SK-N-SH (cell line): ENCODE measurements at regions of chr2 and their contacts with region 1.

Region 1: GRCh38 chr2:37414470-37414949 is 70.1 kb downstream of the QPCT start:
- DNase-seq: peak; percentile 72
- H3K4me3 ChIP-seq: no peak overlapping the region; a peak in 1 of 4 replicates
- H3K27ac ChIP-seq: peak overlapping the region; percentile 42 to 87; a peak in 3 of 4 replicates
- H3K4me1 ChIP-seq: peaks cover 10 to 16% of the 10 kb centered on the region in 2 experiments
- H3K27me3 ChIP-seq: no peaks in the 10 kb centered on the region
- CTCF ChIP-seq: peak; percentile 99
- EP300 ChIP-seq: 0 out of 4 replicates have a peak, but pooled peaks of 1 of the 2 experiments have one; percentile 36
- RAD21 ChIP-seq: peak; percentile 100

Region 2: DNA sequence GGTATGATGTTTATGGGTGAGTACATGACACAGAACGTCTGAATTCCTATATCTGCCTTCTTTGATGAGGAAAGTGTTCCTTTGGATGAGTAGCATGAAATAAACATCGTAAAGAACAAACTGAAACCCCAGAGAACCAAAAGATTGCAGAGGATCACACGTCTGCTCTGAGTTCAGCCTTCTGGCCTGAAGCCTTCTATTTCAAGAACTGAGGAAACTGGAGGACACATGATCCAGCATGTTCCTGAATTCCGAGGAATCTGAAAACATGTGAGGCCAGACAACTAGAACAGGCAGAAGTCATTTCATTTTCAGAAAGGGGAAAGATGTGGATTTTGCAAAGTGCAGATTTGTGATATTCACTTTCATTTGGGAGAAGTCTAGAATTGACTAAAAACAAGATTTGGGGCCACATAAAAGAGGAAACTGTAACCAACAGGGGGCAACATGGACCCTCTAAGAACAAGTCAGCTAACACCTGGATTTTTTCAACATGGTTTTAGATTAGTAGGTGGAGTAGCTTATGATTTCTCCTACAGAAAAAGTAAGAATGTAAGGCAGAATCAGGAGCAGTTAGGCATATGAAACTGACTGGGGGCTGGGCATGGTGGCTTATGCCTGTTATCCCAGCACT is 234.4 kb before region 1 on chr2:
- CTCF ChIA-PET with region 1: no interaction called
- POLR2A ChIA-PET with region 1: no interaction called
- DNase-seq: no peak
- H3K4me3 ChIP-seq: no peak overlapping the region
- H3K27ac ChIP-seq: no peak overlapping the region
- H3K4me1 ChIP-seq: no peaks in the 10 kb centered on the region
- H3K27me3 ChIP-seq: no peaks in the 10 kb centered on the region
- CTCF ChIP-seq: no peak; the same call in 1 of the 2 replicates
- EP300 ChIP-seq: no peak
- RAD21 ChIP-seq: no peak

Region 3: GRCh38 chr2:37427241-37427640 is 12.7 kb after region 1 on chr2:
- CTCF ChIA-PET with region 1: interaction called, 30 read pairs
- POLR2A ChIA-PET with region 1: no interaction called
- DNase-seq: no peak
- H3K4me3 ChIP-seq: no peak overlapping the region
- H3K27ac ChIP-seq: no peak overlapping the region
- H3K4me1 ChIP-seq: no peaks in the 10 kb centered on the region
- H3K27me3 ChIP-seq: no peaks in the 10 kb centered on the region
- CTCF ChIP-seq: no peak
- EP300 ChIP-seq: no peak
- RAD21 ChIP-seq: no peak

Region 4: DNA sequence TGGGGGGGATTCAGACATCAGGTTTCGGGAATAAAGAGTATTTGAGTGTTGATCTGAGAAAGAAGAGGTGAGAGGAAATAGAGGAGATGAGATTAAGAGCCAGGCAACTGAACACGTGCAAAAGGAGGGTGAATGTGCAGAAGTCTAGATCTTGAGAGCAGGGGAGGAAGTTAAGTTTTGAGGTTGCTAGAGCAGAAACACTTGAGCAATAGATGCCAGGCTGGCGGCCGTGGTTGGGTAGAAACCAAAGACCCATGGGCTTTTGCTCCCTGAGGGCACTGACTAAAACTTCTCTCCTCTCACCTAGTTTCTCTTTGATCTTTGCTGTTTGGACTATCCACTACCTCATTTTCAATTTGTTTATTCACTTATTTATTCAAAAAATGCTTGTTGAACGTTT is 140.9 kb after region 1 on chr2:
- CTCF ChIA-PET with region 1: interaction called, 64 read pairs
- POLR2A ChIA-PET with region 1: interaction called, 3 read pairs
- DNase-seq: no peak
- H3K4me3 ChIP-seq: no peak overlapping the region
- H3K27ac ChIP-seq: peak overlapping the region in 1 of 2 experiments; percentile 99; a peak in 2 of 4 replicates
- H3K4me1 ChIP-seq: peaks cover under 1 to 42% of the 10 kb centered on the region in 2 experiments; a peak in 3 of 4 replicates
- H3K27me3 ChIP-seq: no peaks in the 10 kb centered on the region
- CTCF ChIP-seq: no peak
- EP300 ChIP-seq: no peak
- RAD21 ChIP-seq: no peak

Region 5: DNA sequence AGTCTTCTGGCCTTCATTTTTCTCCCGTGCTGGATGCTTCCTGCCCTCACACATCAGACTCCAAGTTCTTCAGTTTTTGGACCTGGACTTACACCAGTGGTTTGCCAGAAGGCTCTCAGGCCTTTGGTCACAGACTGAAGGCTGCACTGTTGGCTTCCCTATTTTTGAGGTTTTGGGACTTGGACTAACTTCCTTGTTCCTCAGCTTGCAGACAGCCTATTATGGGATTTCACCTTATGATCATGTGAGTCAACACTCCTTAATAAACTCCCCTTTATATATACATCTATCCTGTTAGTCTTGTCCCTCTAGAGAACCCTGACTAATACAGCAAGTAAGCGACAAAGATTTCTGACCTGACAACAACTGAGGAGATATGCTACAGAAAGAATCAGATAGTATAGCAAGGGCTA is 249.7 kb after region 1 on chr2:
- CTCF ChIA-PET with region 1: interaction called, 55 read pairs
- POLR2A ChIA-PET with region 1: interaction called, 10 read pairs
- DNase-seq: no peak
- H3K4me3 ChIP-seq: no peak overlapping the region
- H3K27ac ChIP-seq: peak overlapping the region; percentile 30 to 34; a peak in 2 of 4 replicates
- H3K4me1 ChIP-seq: peaks cover 60 to 67% of the 10 kb centered on the region in 2 experiments
- H3K27me3 ChIP-seq: no peaks in the 10 kb centered on the region
- CTCF ChIP-seq: no peak
- EP300 ChIP-seq: no peak
- RAD21 ChIP-seq: no peak

Region 6: GRCh38 chr2:37851828-37852584 is 437.5 kb after region 1 on chr2:
- CTCF ChIA-PET with region 1: interaction called, 58 read pairs
- POLR2A ChIA-PET with region 1: interaction called, 12 read pairs
- DNase-seq: no peak
- H3K4me3 ChIP-seq: no peak overlapping the region
- H3K27ac ChIP-seq: peak overlapping the region in 1 of 2 experiments; percentile 80; a peak in 3 of 4 replicates
- H3K4me1 ChIP-seq: peaks cover 14 to 47% of the 10 kb centered on the region in 2 experiments; a peak in 3 of 4 replicates
- H3K27me3 ChIP-seq: no peaks in the 10 kb centered on the region
- CTCF ChIP-seq: no peak
- EP300 ChIP-seq: no peak
- RAD21 ChIP-seq: no peak

Region 7: GRCh38 chr2:38274286-38275276 is 860.1 kb after region 1 on chr2:
- CTCF ChIA-PET with region 1: interaction called, 10 read pairs
- POLR2A ChIA-PET with region 1: no interaction called
- DNase-seq: peak; percentile 81
- H3K4me3 ChIP-seq: no peak overlapping the region
- H3K27ac ChIP-seq: 0 out of 4 replicates have a peak overlapping the region, but pooled peaks of 1 of the 2 experiments have one; percentile 18
- H3K4me1 ChIP-seq: no peaks in the 10 kb centered on the region; a peak in 1 of 4 replicates
- H3K27me3 ChIP-seq: no peaks in the 10 kb centered on the region
- CTCF ChIP-seq: peak; percentile 86
- EP300 ChIP-seq: peak in 1 of 2 experiments; percentile 50; a peak in 1 of 4 replicates
- RAD21 ChIP-seq: peak; percentile 100